Heart left ventricle (tissue), 16 donors: ENCODE measurements at regions of chr3 and their contacts with region 1.

Region 1: DNA sequence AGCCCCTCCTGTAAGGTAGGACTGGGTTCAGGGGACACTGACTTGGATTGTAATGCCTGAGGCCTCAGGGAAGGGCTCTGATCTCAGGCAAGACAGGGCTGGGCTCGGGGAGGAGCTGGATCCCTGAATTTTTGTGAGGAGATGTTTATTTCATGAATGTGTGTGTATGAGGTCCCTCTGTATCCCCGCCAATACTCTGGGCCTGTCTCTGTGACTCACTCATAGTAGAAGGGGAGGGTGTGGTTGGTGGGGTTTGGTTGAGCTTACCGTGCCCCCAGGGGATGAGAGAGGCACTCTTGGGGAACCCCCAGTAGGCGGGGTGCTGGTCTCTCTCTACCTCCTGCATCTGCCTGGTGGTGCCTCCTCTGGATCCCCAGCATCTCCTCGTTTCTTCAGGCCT is 28.1 kb downstream of the RPSA start:
- DNase-seq: no peak
- ATAC-seq: peak in 1 of 4 donors; percentile 25
- H3K4me3 ChIP-seq: no peak overlapping the region
- H3K27ac ChIP-seq: no peak overlapping the region
- H3K4me1 ChIP-seq: peaks cover 0 to 11% (median 5%) of the 10 kb centered on the region in 12 donors
- H3K27me3 ChIP-seq: no peaks in the 10 kb centered on the region
- CTCF ChIP-seq: no peak
- POLR2A ChIP-seq: no peak

Region 2: DNA sequence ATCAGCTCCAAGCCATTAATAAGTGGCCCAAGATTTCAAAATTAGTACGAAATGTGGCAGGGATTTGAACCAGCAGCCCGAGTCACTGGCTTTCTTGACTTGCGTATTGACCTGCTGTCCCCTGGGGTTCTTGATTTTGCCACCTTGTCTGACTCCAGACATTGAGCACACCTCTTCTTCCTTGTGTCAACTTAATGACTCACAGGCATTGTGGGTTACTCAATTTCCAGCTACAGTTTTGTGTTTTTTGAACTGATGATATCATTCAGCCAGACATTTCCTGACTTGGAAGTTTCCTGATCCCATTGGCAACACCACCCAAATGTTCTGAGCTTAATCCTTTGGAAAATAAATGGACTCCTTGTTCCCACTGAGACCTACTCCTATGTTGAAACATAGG is 97.1 kb after region 1 on chr3:
- intact Hi-C with region 1: no loop called
- DNase-seq: peak in 1 of 5 donors; percentile 8
- ATAC-seq: peak in 3 of 4 donors; percentile 64 to 83 (median 82)
- H3K4me3 ChIP-seq: no peak overlapping the region
- H3K27ac ChIP-seq: peak overlapping the region in 1 of 12 donors; percentile 47
- H3K4me1 ChIP-seq: no peaks in the 10 kb centered on the region
- H3K27me3 ChIP-seq: no peaks in the 10 kb centered on the region
- CTCF ChIP-seq: no peak
- POLR2A ChIP-seq: no peak

Region 3: DNA sequence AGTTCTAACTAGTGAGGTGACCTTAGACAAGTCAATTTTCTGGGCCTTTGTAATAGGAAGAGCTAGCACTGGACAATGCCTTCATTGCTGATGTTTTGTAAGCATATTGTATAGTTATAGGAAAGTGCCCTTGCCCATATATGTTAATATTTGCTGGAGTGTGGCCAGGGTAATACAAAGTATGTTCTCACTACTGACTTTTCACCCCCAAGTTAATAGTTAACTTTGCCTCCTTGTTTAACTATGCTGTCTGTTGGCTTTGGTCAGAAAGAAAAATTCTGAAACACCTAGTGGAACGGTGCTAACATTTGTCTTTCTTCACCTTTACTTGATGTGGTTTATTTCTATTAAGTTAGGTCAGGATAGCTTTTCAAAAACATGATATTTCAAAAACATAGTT is 1477.4 kb after region 1 on chr3:
- intact Hi-C with region 1: loop called in 1 of 10 experiments (anchors 10 kb)
- DNase-seq: no peak
- ATAC-seq: no peak
- H3K4me3 ChIP-seq: no peak overlapping the region
- H3K27ac ChIP-seq: no peak overlapping the region
- H3K4me1 ChIP-seq: no peaks in the 10 kb centered on the region
- H3K27me3 ChIP-seq: no peaks in the 10 kb centered on the region
- CTCF ChIP-seq: no peak
- POLR2A ChIP-seq: no peak